K562 (cell line): ENCODE measurements at regions of chr11 and their contacts with region 1.

Region 1: GRCh38 chr11:57324886-57325734 is at the start of gene TNKS1BP1:
- DNase-seq: peak; percentile 87 to 96 (median 92)
- ATAC-seq: peak; percentile 91
- H3K4me3 ChIP-seq: peak within 1 kb of the TSS; percentile 60
- H3K27ac ChIP-seq: peak within 1 kb of the TSS; percentile 88
- H3K4me1 ChIP-seq: peaks cover 47 to 54% of the 10 kb centered on the region in 2 experiments
- H3K27me3 ChIP-seq: no peaks in the 10 kb centered on the region
- CTCF ChIP-seq: no peak
- EP300 ChIP-seq: no peak
- POLR2A ChIP-seq: peak; percentile 87
- RAD21 ChIP-seq: no peak
- polyA plus RNA-seq, gene TNKS1BP1: 1.1 to 1.2 TPM

Region 2: GRCh38 chr11:57133366-57134038 is 191.6 kb before region 1 on chr11:
- CTCF ChIA-PET with region 1: no interaction called
- POLR2A ChIA-PET with region 1: no interaction called
- in situ Hi-C with region 1: no loop called
- intact Hi-C with region 1: no loop called
- DNase-seq: no peak
- ATAC-seq: no peak
- H3K4me3 ChIP-seq: no peak overlapping the region
- H3K27ac ChIP-seq: no peak overlapping the region
- H3K4me1 ChIP-seq: no peaks in the 10 kb centered on the region
- H3K27me3 ChIP-seq: no peaks in the 10 kb centered on the region
- CTCF ChIP-seq: no peak
- EP300 ChIP-seq: no peak
- POLR2A ChIP-seq: no peak
- RAD21 ChIP-seq: no peak

Region 3: GRCh38 chr11:57277845-57278709 is 47.0 kb before region 1 on chr11:
- CTCF ChIA-PET with region 1: no interaction called
- POLR2A ChIA-PET with region 1: no interaction called
- in situ Hi-C with region 1: no loop called
- intact Hi-C with region 1: loop called (anchors 5 kb)
- DNase-seq: peak; percentile 70 to 76 (median 74)
- ATAC-seq: peak; percentile 92
- H3K4me3 ChIP-seq: no peak overlapping the region
- H3K27ac ChIP-seq: no peak overlapping the region
- H3K4me1 ChIP-seq: peaks cover 0 to 14% of the 10 kb centered on the region in 2 experiments; a peak in 4 of 5 replicates
- H3K27me3 ChIP-seq: no peaks in the 10 kb centered on the region
- CTCF ChIP-seq: peak; percentile 75 to 94 (median 80)
- EP300 ChIP-seq: 0 out of 2 replicates have a peak, but pooled peaks have one; percentile 3
- POLR2A ChIP-seq: no peak
- RAD21 ChIP-seq: peak; percentile 55 to 63

Region 4: GRCh38 chr11:57311109-57311936 is 13.8 kb before region 1 on chr11:
- CTCF ChIA-PET with region 1: no interaction called
- POLR2A ChIA-PET with region 1: interaction called, 68 read pairs
- in situ Hi-C with region 1: no loop called
- intact Hi-C with region 1: loop called (anchors 1 kb)
- DNase-seq: peak; percentile 93 to 96 (median 95)
- ATAC-seq: peak; percentile 96
- H3K4me3 ChIP-seq: peak overlapping the region; percentile 37
- H3K27ac ChIP-seq: peak overlapping the region; percentile 51
- H3K4me1 ChIP-seq: peaks cover 22 to 49% of the 10 kb centered on the region in 2 experiments
- H3K27me3 ChIP-seq: no peaks in the 10 kb centered on the region
- CTCF ChIP-seq: no peak
- EP300 ChIP-seq: no peak
- POLR2A ChIP-seq: peak; percentile 37; the same call in 1 of the 2 replicates
- RAD21 ChIP-seq: no peak